PC-9 (cell line): ENCODE measurements at regions of chr4 and their contacts with region 1.

Region 1: DNA sequence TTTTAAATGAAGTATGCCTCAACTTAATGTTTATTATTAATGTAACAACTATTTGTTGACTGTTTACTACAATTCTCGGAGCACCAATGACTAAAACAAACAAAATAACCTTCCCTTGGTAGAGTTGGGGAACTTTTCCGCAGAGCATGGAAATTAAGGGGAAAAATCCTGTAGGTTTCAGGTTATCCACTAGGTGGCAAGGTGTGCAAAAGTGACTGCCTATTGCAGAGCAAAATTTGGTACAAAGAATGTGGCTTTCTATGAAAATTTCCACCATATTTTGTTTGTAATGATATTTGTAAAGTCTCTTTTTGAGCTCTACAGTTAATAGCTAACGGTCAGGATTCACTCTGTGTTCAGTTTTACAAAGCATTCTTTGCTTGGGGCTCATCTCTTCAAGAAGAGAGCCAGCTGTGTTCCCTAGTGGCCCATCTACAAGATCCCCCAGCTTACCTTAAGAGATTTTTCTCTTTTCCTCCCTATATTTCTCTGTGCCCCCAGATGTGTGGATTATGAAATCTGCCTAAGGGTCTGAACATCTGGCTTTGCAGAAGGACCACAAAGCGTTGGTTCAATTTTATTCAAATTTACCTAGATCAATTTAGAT is 61.1 kb downstream of the FBXO8 start:
- DNase-seq: no peak
- H3K4me3 ChIP-seq: no peak overlapping the region
- H3K27ac ChIP-seq: no peak overlapping the region
- H3K4me1 ChIP-seq: no peaks in the 10 kb centered on the region
- H3K27me3 ChIP-seq: no peaks in the 10 kb centered on the region
- CTCF ChIP-seq: peak; percentile 71

Region 2: GRCh38 chr4:174318829-174319764 is 96.7 kb after region 1 on chr4:
- CTCF ChIA-PET with region 1: no interaction called
- POLR2A ChIA-PET with region 1: no interaction called
- intact Hi-C with region 1: loop called (anchors 5 kb)
- DNase-seq: no peak
- H3K4me3 ChIP-seq: no peak overlapping the region
- H3K27ac ChIP-seq: no peak overlapping the region
- H3K4me1 ChIP-seq: no peaks in the 10 kb centered on the region
- H3K27me3 ChIP-seq: no peaks in the 10 kb centered on the region
- CTCF ChIP-seq: peak; percentile 77